Endothelial cell of umbilical vein (primary cell): ENCODE measurements at regions of chr9 and their contacts with region 1.

Region 1: DNA sequence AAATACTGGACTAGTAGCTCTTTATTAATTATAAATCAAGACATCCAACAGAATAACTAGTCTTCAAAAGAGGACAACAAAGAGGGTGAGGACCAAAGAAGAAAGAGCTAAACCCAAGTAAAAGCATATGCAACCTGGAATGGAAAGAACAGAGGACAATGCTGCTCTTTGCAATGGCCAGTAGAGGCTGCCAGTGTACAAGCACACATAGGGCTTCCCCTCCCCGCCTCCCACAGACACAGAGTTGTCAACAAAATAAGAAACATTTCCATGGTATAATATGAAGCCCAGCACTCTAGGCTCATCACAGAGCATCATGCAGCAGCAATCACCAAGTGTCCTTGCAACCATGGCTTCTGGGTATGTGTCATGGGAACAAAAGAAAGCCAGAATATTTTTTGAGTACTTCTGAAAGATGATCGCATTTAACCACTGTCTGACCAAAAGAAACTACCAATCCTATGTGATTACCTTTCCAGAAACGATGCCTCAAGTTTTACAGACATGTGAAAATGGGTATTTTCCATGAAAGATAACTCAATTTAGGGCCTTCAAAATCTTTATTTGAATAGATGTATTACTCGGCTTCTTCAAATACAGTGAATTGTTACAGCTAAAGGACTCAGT is 58.1 kb downstream of the RFX3 start:
- DNase-seq: peak; percentile 66
- H3K4me3 ChIP-seq: no peak overlapping the region
- H3K27ac ChIP-seq: no peak overlapping the region
- H3K4me1 ChIP-seq: peaks cover 13% of the 10 kb centered on the region
- H3K27me3 ChIP-seq: no peaks in the 10 kb centered on the region
- CTCF ChIP-seq: peak; percentile 94
- POLR2A ChIP-seq: no peak

Region 2: GRCh38 chr9:3478549-3478953 is 10.8 kb after region 1 on chr9:
- CTCF ChIA-PET with region 1: interaction called, 14 read pairs
- POLR2A ChIA-PET with region 1: no interaction called
- dilution Hi-C with region 1: no loop called
- intact Hi-C with region 1: no loop called
- DNase-seq: peak; percentile 76
- H3K4me3 ChIP-seq: no peak overlapping the region
- H3K27ac ChIP-seq: peak overlapping the region; percentile 83
- H3K4me1 ChIP-seq: peaks cover 58% of the 10 kb centered on the region
- H3K27me3 ChIP-seq: no peaks in the 10 kb centered on the region
- CTCF ChIP-seq: no peak
- POLR2A ChIP-seq: no peak

Region 3: DNA sequence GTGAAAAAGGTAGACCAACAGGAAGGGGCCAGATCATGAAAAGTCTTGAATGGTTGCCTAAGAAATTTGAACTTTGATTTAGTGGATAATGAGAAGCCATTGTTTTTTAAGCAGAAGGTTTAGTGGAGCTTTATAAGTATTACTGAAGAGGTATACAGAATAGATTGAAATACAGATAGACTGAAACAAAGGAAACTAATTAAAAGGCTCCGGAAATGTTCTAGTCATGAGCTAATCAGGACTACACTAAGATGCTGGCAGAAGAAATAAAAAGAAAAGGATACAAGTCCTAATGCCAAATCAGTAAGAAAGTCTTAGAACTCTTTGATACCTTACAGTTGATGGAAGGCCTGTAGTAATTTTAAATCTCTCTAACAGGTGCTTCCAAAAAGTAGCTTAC is 103.8 kb after region 1 on chr9:
- CTCF ChIA-PET with region 1: interaction called, 5 read pairs
- POLR2A ChIA-PET with region 1: no interaction called
- dilution Hi-C with region 1: no loop called
- intact Hi-C with region 1: loop called (anchors 5 kb)
- DNase-seq: peak; percentile 43
- H3K4me3 ChIP-seq: no peak overlapping the region
- H3K27ac ChIP-seq: no peak overlapping the region
- H3K4me1 ChIP-seq: peaks cover 16% of the 10 kb centered on the region
- H3K27me3 ChIP-seq: no peaks in the 10 kb centered on the region
- CTCF ChIP-seq: no peak
- POLR2A ChIP-seq: no peak

Region 4: GRCh38 chr9:3647652-3648051 is 179.9 kb after region 1 on chr9:
- CTCF ChIA-PET with region 1: interaction called, 5 read pairs
- POLR2A ChIA-PET with region 1: no interaction called
- dilution Hi-C with region 1: no loop called
- intact Hi-C with region 1: loop called (anchors 1 kb)
- DNase-seq: peak; percentile 18
- H3K4me3 ChIP-seq: no peak overlapping the region
- H3K27ac ChIP-seq: no peak overlapping the region
- H3K4me1 ChIP-seq: no peaks in the 10 kb centered on the region
- H3K27me3 ChIP-seq: no peaks in the 10 kb centered on the region
- CTCF ChIP-seq: no peak
- POLR2A ChIP-seq: no peak

Region 5: GRCh38 chr9:3692606-3693005 is 224.9 kb after region 1 on chr9:
- CTCF ChIA-PET with region 1: no interaction called
- POLR2A ChIA-PET with region 1: no interaction called
- dilution Hi-C with region 1: no loop called
- intact Hi-C with region 1: no loop called
- DNase-seq: no peak
- H3K4me3 ChIP-seq: no peak overlapping the region
- H3K27ac ChIP-seq: no peak overlapping the region
- H3K4me1 ChIP-seq: no peaks in the 10 kb centered on the region
- H3K27me3 ChIP-seq: no peaks in the 10 kb centered on the region
- CTCF ChIP-seq: no peak
- POLR2A ChIP-seq: no peak

Region 6: GRCh38 chr9:4117835-4118610 is 650.3 kb after region 1 on chr9:
- CTCF ChIA-PET with region 1: no interaction called
- POLR2A ChIA-PET with region 1: no interaction called
- dilution Hi-C with region 1: no loop called
- intact Hi-C with region 1: loop called (anchors 2 kb)
- DNase-seq: no peak
- H3K4me3 ChIP-seq: no peak overlapping the region
- H3K27ac ChIP-seq: no peak overlapping the region
- H3K4me1 ChIP-seq: no peaks in the 10 kb centered on the region
- H3K27me3 ChIP-seq: no peaks in the 10 kb centered on the region
- CTCF ChIP-seq: peak; percentile 54 to 57
- POLR2A ChIP-seq: no peak